ENCODE measurements at regions of chr4 and their contacts with region 1.

Region 1: DNA sequence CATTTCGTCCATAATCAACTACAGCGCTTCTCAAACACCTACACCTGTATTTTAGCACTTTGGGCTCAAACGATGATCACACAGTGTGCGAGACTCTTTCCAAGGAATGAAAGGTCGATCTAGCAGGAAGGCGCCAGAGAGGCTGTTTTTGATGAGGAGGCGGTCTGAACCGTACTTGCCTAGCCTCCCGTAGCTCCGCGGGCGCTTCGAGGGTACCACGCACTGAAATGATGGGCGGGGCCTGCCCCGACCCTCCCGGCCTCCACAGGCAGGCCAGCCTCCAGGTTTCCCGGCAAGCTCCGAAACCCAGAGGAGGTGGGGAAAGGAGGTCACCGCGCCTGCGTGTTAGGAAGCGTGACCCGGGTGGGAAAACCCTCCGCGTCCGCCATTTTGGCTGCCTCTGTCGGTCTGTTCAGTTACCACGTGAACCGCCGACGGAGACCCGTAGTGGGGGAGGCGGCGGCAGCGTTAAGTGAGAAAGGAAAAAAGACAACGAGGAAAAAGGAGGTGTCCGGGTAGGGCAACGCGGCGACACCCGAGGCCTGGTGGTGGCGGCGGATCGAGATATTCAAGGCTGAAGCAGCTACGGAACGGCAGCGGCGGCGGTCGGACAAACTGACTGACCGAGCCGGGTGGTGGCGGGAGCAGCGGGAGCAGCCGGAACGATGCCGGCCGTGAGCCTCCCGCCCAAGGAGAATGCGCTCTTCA is at the start of gene NAA15:
- DNase-seq: peak; percentile 95
- ATAC-seq: peak; percentile 90
- H3K4me3 Mint-ChIP-seq: peak within 1 kb of the TSS; percentile 93
- H3K27ac Mint-ChIP-seq: peak within 1 kb of the TSS; percentile 95
- H3K4me1 Mint-ChIP-seq: peaks cover 34% of the 10 kb centered on the region
- H3K27me3 Mint-ChIP-seq: no peaks in the 10 kb centered on the region
- total RNA-seq, gene NAA15: 42.1 to 50.3 TPM

Region 2: GRCh38 chr4:139312552-139313332 is 11.5 kb after region 1 on chr4:
- POLR2A ChIA-PET with region 1: interaction called, 15 read pairs
- DNase-seq: no peak
- ATAC-seq: no peak
- H3K4me3 Mint-ChIP-seq: no peak overlapping the region
- H3K27ac Mint-ChIP-seq: peak overlapping the region; percentile 17
- H3K4me1 Mint-ChIP-seq: peaks cover 49% of the 10 kb centered on the region
- H3K27me3 Mint-ChIP-seq: no peaks in the 10 kb centered on the region

Region 3: DNA sequence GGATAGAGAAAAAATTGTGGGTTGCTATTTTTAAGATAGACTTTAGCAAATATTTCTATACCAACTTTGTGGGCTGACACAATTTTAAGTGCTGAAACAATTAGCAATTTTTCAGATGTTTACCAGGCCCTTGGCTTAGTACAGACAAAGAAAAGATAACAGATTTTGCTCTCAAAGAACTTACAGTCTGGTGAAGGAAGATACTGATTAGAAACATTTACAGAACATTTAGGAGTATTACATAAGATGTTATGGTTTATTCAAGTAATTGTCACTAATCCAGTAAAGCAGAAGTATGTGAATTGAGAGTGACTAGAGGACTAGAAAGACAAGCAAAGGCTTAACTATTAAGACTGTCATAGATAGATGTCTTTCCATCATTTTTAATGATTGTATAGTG is 36.3 kb after region 1 on chr4:
- POLR2A ChIA-PET with region 1: no interaction called
- DNase-seq: no peak
- ATAC-seq: no peak
- H3K4me3 Mint-ChIP-seq: no peak overlapping the region
- H3K27ac Mint-ChIP-seq: no peak overlapping the region
- H3K4me1 Mint-ChIP-seq: peaks cover 6% of the 10 kb centered on the region
- H3K27me3 Mint-ChIP-seq: no peaks in the 10 kb centered on the region